Kidney (tissue), 22 donors: ENCODE measurements at regions of chr3 and their contacts with region 1.

Region 1: GRCh38 chr3:129840707-129841360 is 52.7 kb downstream of the TMCC1 start:
- DNase-seq: no peak
- H3K4me3 ChIP-seq: no peak overlapping the region
- H3K27ac ChIP-seq: no peak overlapping the region
- H3K4me1 ChIP-seq: no peaks in the 10 kb centered on the region
- H3K27me3 ChIP-seq: no peaks in the 10 kb centered on the region
- CTCF ChIP-seq: no peak

Region 2: DNA sequence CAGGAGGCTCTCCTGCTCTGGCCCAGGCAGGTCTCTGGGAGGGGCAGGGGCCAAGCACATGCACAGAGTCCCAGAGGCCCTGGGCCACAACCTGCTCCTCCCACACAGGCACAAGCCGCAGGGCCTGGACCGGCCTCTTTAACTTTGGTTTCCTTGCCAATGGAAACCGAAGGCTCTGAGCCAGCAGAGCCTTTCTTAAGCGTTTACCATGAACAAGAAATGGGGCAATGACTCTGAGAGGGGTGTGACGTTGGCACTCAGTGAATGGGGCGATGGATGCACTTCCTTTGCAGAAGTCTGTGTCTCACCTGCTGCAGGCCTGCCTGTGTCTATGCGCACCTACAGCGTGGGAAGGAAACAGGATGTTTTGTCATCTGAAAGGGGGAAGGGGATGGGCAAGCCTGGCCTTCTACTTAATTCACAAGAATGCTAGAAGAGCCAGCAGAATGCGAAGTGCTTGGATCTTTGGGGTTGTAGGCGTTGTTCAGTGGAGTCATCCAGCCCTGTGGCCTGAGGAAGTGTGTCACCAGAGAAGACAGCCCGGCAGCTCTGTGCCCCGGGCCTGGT is 359.0 kb before region 1 on chr3:
- intact Hi-C with region 1: loop called (anchors 5 kb)
- DNase-seq: no peak
- H3K4me3 ChIP-seq: no peak overlapping the region
- H3K27ac ChIP-seq: no peak overlapping the region
- H3K4me1 ChIP-seq: peaks cover 0 to 7% (median 0%) of the 10 kb centered on the region in 3 donors
- H3K27me3 ChIP-seq: no peaks in the 10 kb centered on the region
- CTCF ChIP-seq: no peak